BJ (cell line): ENCODE measurements at regions of chr7 and their contacts with region 1.

Region 1: GRCh38 chr7:101602484-101603241 is 26.4 kb downstream of the MYL10 start:
- DNase-seq: no peak
- H3K4me3 ChIP-seq: no peak overlapping the region
- H3K27me3 ChIP-seq: no peaks in the 10 kb centered on the region
- CTCF ChIP-seq: peak; percentile 98

Region 2: GRCh38 chr7:101410743-101411507 is 191.7 kb before region 1 on chr7:
- CTCF ChIA-PET with region 1: no interaction called
- POLR2A ChIA-PET with region 1: no interaction called
- DNase-seq: no peak
- H3K4me3 ChIP-seq: no peak overlapping the region
- H3K27me3 ChIP-seq: peaks cover 11% of the 10 kb centered on the region
- CTCF ChIP-seq: peak; percentile 94

Region 3: DNA sequence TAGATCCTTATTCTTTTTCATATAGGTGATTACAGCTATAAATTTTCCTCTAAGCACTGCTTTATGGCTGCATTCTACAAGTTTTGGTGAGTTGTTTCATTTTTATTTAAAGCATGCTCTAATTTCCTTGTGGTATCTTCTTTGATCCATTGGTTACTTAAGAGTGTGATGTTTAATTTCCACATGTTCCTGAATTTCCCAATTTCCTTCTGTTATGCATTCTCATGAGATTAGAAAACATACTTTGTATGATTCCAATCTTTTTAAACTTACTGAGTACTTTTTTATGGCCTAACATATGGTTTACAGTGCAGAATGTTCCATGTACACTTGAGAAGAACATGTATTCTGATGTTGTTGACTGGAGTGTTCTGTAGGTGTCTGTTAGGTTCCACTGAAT is 26.9 kb before region 1 on chr7:
- CTCF ChIA-PET with region 1: interaction called, 7 read pairs
- POLR2A ChIA-PET with region 1: interaction called, 14 read pairs
- DNase-seq: peak; percentile 37
- H3K4me3 ChIP-seq: no peak overlapping the region
- H3K27me3 ChIP-seq: peaks cover 1% of the 10 kb centered on the region; the same call in 1 of the 2 replicates
- CTCF ChIP-seq: no peak

Region 4: DNA sequence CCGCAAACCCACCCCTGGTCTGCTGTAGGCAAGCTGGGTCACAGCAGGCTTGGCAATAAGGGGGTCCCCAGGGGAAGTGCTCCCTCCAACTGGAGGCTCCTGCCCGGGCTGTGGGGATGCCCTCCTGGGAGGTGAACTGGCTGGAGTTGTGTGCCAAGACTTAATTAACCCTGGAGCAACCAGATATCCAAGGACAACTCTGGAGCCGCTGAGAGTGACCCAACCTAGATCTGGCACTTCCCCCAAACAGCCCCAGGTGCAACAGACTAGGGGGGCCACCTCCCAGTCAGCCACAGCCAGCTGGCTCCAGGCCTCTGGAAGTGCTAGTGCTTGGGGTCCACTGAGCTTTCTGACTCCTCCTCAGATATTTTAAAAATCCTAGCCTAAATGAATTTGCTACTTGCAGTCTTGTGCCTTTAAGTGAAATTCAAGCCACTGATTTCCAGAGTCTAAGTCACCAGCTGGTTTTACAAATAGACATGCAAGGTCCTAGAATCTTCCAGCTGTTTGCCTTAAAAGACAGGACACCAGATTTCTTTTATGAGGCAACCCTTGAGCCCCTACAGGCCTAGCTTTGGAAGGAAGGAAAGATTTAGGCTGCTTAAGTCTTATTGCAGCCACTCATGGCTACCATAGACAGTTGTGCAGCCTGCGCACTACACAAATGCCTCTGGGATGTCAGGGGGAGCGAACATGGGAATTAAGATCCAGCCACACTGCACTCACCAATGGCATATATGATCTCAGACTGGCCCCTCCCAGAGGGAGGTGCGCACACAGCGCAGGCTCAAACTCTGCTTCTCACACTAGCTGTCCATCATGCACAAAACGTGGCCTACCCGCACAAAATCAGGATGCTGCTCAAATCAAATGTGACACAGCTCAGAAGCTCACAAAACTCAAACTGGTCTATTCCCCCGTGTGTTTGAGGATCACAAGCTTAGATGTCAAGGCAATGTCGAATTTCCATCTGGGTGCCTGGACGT is 69.0 kb after region 1 on chr7:
- CTCF ChIA-PET with region 1: interaction called, 12 read pairs
- POLR2A ChIA-PET with region 1: no interaction called
- DNase-seq: no peak
- H3K4me3 ChIP-seq: no peak overlapping the region
- H3K27me3 ChIP-seq: no peaks in the 10 kb centered on the region
- CTCF ChIP-seq: no peak

Region 5: GRCh38 chr7:101688183-101688831 is 85.6 kb after region 1 on chr7:
- CTCF ChIA-PET with region 1: interaction called, 22 read pairs
- POLR2A ChIA-PET with region 1: no interaction called
- DNase-seq: no peak
- H3K4me3 ChIP-seq: peak overlapping the region; percentile 29
- H3K27me3 ChIP-seq: no peaks in the 10 kb centered on the region; the same call in 1 of the 2 replicates
- CTCF ChIP-seq: peak; percentile 96

Region 6: DNA sequence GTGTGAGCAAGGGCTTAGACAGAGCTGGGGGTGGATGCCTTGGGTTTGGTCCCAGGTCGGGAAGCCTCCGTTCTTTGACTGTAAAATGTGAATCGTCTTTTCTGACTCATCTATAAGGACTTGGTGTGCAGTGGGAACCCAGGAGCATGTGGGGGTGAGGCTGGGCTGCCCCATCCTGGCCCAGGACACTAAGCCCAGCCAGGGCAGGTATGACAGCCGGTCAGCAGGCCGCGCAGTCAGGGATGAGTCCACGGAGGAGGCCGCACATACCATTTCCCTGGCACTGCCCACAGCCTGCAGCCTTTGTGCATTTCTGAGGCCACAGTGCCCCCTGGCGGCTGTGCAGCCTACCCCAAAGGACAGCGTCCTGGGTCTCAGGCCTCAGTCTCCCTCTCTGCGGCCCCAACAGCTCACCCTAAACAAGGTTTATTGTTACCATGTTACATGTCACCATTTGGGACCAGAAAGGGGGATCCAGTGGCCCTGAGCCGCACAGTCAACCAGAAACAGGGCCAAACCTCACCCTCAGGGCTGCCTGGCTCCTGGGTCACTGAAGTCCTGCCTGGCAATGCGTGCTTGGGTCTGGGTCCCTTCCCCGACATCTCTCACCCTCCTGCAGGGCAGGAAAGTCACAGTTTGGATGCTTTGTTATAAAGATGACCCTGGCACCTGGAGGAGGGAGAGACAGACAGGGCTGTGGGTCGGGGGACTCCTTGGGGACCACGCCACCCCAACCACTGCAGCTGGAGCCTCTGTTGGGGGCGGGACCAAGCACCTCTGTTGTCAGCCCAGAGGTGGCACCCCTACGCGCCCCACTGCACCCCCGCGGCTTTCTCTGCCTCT is 669.6 kb after region 1 on chr7:
- CTCF ChIA-PET with region 1: interaction called, 27 read pairs
- POLR2A ChIA-PET with region 1: no interaction called
- DNase-seq: no peak
- H3K4me3 ChIP-seq: no peak overlapping the region
- H3K27me3 ChIP-seq: no peaks in the 10 kb centered on the region
- CTCF ChIP-seq: peak; percentile 92